Mammary epithelial cell (primary cell): ENCODE measurements at regions of chr9 and their contacts with region 1.

Region 1: GRCh38 chr9:12719431-12719830 is 26.2 kb downstream of the TYRP1 start:
- DNase-seq: no peak
- H3K4me3 ChIP-seq: no peak overlapping the region
- H3K27ac ChIP-seq: no peak overlapping the region
- H3K4me1 ChIP-seq: no peaks in the 10 kb centered on the region
- H3K27me3 ChIP-seq: no peaks in the 10 kb centered on the region
- CTCF ChIP-seq: peak; percentile 53 to 60

Region 2: DNA sequence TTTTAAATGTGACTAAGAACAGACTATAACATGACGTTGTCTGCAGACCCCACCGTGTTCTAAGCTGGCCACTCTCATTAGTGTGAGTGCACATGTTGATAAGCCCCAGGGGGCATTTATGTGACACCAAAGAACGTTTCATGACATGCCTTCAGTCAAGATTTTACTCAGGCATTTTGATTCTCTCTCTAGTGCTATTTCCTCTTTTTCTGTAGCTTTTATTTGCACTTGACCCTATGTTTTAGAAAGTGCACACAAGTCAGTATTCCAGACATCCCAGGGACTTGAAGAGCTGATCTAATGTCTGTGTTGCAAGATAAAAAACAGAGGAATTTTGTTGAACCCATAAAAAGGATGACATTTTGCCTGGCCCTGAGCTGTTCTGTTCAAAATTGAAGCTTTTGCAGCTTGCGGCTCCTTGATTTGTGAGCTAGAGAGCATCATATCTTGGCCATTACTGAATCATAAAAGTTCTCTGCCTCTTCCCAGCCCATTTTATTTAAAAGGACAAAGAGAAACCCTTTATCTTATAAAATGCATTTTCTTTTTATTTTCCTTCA is 107.1 kb before region 1 on chr9:
- CTCF ChIA-PET with region 1: no interaction called
- dilution Hi-C with region 1: no loop called
- in situ Hi-C with region 1: no loop called
- intact Hi-C with region 1: no loop called
- DNase-seq: no peak
- H3K4me3 ChIP-seq: no peak overlapping the region
- H3K27ac ChIP-seq: no peak overlapping the region
- H3K4me1 ChIP-seq: no peaks in the 10 kb centered on the region
- H3K27me3 ChIP-seq: no peaks in the 10 kb centered on the region
- CTCF ChIP-seq: no peak

Region 3: DNA sequence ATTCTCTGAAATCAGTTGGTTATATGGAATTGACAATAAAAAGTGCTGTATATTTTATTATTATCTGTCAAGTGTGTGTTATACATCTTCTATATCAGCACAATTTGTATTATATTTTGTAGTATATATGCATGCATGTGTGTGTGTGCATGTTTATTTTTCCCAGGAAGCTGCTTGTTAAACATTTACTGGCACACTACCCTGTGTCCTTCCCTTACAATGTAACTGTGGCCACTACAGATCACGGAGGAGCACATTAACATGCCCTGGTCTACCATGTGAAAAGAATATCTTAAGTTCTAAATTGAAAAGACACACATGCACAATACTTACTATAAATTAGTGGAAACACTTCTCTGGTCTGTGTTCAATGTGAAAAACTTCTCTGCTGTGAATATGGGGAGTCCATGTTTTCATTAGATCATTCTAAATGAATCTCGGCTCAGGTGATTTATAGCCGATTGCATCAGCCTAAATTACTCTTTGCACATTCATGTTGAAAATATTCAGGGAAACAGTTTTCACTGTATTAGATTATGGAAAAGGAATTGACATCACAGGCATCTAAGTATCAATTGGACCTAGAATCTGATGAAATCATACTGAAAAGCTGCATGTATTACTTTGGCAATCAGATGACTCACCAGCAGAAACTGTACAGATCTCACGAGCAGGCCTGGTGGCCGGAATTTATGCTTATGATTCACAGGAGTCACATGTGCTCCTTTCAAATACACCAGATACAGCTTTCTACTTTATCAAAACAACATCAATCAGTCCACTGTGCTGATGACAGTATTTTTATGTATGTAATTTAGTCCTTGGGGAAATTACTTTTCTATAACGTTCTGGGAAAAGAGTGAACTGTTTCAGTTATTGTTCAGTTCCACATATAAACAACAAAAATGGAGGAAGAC is 94.8 kb after region 1 on chr9:
- CTCF ChIA-PET with region 1: interaction called, 4 read pairs
- dilution Hi-C with region 1: no loop called
- in situ Hi-C with region 1: no loop called
- intact Hi-C with region 1: loop called (anchors 2 kb)
- DNase-seq: peak; percentile 99
- H3K4me3 ChIP-seq: peak overlapping the region; percentile 48 to 67 (median 50)
- H3K27ac ChIP-seq: peak overlapping the region; percentile 100
- H3K4me1 ChIP-seq: peaks cover 58% of the 10 kb centered on the region
- H3K27me3 ChIP-seq: no peaks in the 10 kb centered on the region
- CTCF ChIP-seq: peak in 1 of 2 donors; percentile 39

Region 4: GRCh38 chr9:12933957-12934356 is 214.5 kb after region 1 on chr9:
- CTCF ChIA-PET with region 1: interaction called, 30 read pairs
- dilution Hi-C with region 1: no loop called
- in situ Hi-C with region 1: no loop called
- intact Hi-C with region 1: no loop called
- DNase-seq: peak; percentile 76
- H3K4me3 ChIP-seq: no peak overlapping the region
- H3K27ac ChIP-seq: no peak overlapping the region
- H3K4me1 ChIP-seq: no peaks in the 10 kb centered on the region
- H3K27me3 ChIP-seq: no peaks in the 10 kb centered on the region
- CTCF ChIP-seq: no peak

Region 5: DNA sequence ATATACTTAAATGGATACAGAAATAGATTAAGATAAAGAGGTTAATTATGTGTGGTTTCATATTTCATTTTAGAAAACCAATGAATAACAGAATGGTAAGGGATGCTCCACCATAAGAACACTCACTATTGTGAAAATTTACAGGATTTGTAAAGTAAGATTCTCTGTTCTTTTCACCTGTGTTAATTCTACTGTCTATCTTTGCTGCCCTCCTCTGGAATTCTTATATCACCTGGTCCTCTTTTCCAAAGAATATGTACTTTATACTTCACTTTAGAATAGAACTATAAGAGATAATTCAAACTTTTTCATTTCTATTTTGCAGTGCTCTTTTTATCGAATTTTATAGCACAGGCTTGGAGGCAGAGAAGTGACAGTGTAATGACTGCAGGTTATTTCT is 268.8 kb after region 1 on chr9:
- CTCF ChIA-PET with region 1: no interaction called
- dilution Hi-C with region 1: no loop called
- in situ Hi-C with region 1: no loop called
- intact Hi-C with region 1: loop called (anchors 1 kb)
- DNase-seq: no peak
- H3K4me3 ChIP-seq: no peak overlapping the region
- H3K27ac ChIP-seq: no peak overlapping the region
- H3K4me1 ChIP-seq: no peaks in the 10 kb centered on the region
- H3K27me3 ChIP-seq: no peaks in the 10 kb centered on the region
- CTCF ChIP-seq: no peak

Region 6: GRCh38 chr9:13088720-13089427 is 369.4 kb after region 1 on chr9:
- CTCF ChIA-PET with region 1: no interaction called
- dilution Hi-C with region 1: no loop called
- in situ Hi-C with region 1: loop called (anchors 10 kb)
- intact Hi-C with region 1: loop called (anchors 1 kb)
- DNase-seq: peak; percentile 35
- H3K4me3 ChIP-seq: no peak overlapping the region
- H3K27ac ChIP-seq: no peak overlapping the region
- H3K4me1 ChIP-seq: peaks cover 5% of the 10 kb centered on the region
- H3K27me3 ChIP-seq: no peaks in the 10 kb centered on the region
- CTCF ChIP-seq: peak; percentile 53 to 65